Activated naive CD8-positive, alpha-beta T cell treated with anti-CD3 and anti-CD28 coated beads, Interleukin-2, amount 10 ng/mL, durations not matched to agents 7 days and 5 days (primary cell): ENCODE measurements at regions of chr1 and their contacts with region 1.

Region 1: GRCh38 chr1:200669314-200670241 is at the start of gene DDX59:
- DNase-seq: peak; percentile 94
- ATAC-seq: peak; percentile 84
- H3K4me3 Mint-ChIP-seq: peak within 1 kb of the TSS; percentile 99
- H3K27ac Mint-ChIP-seq: peak within 1 kb of the TSS; percentile 93
- H3K4me1 Mint-ChIP-seq: peaks cover 25% of the 10 kb centered on the region
- H3K27me3 Mint-ChIP-seq: no peaks in the 10 kb centered on the region
- total RNA-seq, gene DDX59: 28.1 to 33.9 TPM

Region 2: GRCh38 chr1:200602632-200603031 is 66.9 kb before region 1 on chr1:
- POLR2A ChIA-PET with region 1: no interaction called
- DNase-seq: no peak
- ATAC-seq: no peak
- H3K4me3 Mint-ChIP-seq: no peak overlapping the region
- H3K27ac Mint-ChIP-seq: no peak overlapping the region
- H3K4me1 Mint-ChIP-seq: peaks cover 2% of the 10 kb centered on the region
- H3K27me3 Mint-ChIP-seq: no peaks in the 10 kb centered on the region

Region 3: DNA sequence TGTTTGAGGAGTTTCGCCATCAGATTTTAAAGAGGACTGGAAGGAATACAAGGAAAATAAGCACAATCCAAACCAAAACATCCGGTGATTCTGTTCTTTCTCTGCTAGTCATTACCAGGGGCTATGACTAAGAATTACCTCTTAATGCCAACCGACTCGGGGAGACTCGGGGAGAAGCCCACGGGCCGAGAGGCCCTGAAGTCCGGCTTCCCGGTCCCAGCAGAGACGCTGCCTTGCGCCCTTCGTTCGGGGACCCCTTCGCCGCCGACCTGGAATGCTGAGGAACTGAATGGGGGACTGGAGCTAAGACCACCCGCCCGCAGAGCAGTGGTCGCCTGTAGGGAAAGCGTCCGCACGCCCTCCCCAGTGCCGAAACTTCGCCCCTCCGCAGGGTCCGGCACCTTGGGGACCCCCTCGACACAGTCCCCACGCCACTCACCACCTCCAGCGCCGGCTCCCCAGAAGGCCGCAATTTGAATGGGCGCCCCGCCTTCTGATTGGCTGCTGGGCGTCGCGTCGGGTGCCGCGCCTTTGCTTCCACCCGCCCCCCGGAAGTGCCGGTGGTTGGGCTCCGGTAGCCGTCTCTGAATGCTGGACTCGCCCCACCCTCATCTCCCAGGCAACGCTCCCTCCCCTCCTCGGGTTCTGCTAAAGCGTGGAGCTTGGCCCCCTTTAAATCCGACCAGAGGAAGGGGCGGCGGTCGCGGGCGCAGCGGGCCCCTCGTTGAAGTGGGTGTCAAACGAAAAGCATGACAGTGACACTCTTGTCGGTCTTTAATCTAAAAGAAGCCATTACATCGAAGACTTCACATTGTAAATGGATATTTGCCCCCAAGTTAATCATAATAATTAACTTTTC is 49.1 kb before region 1 on chr1 and contains the start of gene KIF14:
- POLR2A ChIA-PET with region 1: interaction called, 30 read pairs
- DNase-seq: peak; percentile 95
- ATAC-seq: peak; percentile 97
- H3K4me3 Mint-ChIP-seq: peak within 1 kb of the TSS; percentile 92
- H3K27ac Mint-ChIP-seq: peak within 1 kb of the TSS; percentile 90
- H3K4me1 Mint-ChIP-seq: peaks cover 47% of the 10 kb centered on the region
- H3K27me3 Mint-ChIP-seq: no peaks in the 10 kb centered on the region
- total RNA-seq, gene KIF14: 20.1 to 20.3 TPM

Region 4: GRCh38 chr1:200628223-200628881 is 41.2 kb before region 1 on chr1:
- POLR2A ChIA-PET with region 1: interaction called, 14 read pairs
- DNase-seq: no peak
- ATAC-seq: peak; percentile 59
- H3K4me3 Mint-ChIP-seq: peak overlapping the region; percentile 56
- H3K27ac Mint-ChIP-seq: peak overlapping the region; percentile 64
- H3K4me1 Mint-ChIP-seq: peaks cover 31% of the 10 kb centered on the region
- H3K27me3 Mint-ChIP-seq: no peaks in the 10 kb centered on the region

Region 5: DNA sequence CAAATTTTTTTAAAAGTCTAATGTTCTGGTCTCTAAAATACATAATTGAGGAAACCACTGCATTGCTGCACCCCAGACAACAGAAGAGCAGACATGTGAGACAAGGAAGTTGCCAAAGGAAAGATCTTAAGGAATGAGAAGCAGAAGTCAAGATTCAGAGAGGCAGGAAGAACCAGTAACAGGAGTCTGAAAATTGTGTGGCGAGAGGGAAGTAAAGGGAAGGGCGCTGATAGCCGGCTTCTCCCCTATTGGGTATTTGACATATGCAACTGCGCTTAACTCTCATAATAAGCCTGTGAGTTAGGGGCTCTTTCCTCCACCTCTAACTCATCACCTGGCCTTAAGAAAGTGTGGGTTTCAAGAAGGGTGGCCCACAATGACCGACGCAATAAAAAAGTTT is 27.1 kb before region 1 on chr1:
- POLR2A ChIA-PET with region 1: no interaction called
- DNase-seq: no peak
- ATAC-seq: no peak
- H3K4me3 Mint-ChIP-seq: no peak overlapping the region
- H3K27ac Mint-ChIP-seq: no peak overlapping the region
- H3K4me1 Mint-ChIP-seq: peaks cover 7% of the 10 kb centered on the region
- H3K27me3 Mint-ChIP-seq: no peaks in the 10 kb centered on the region

Region 6: DNA sequence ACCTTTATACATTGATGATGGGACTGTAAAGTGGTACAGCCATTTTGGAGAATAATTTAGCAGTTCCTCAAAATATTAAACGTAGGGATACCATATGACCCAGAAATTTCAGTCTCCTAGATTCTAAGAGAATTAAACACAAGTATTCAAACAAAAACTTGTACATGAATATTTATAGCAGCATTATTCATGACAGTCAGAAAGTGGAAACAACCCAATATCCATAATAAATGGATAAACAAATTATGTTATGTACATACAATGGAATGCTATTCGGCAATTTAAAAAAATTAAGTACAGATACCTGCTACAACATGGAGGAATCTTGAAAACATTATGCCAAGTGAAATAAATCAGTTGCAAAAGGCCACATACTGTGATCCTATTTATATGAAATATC is 17.0 kb after region 1 on chr1:
- POLR2A ChIA-PET with region 1: no interaction called
- DNase-seq: no peak
- ATAC-seq: no peak
- H3K4me3 Mint-ChIP-seq: no peak overlapping the region
- H3K27ac Mint-ChIP-seq: no peak overlapping the region
- H3K4me1 Mint-ChIP-seq: no peaks in the 10 kb centered on the region
- H3K27me3 Mint-ChIP-seq: peaks cover 10% of the 10 kb centered on the region

Region 7: GRCh38 chr1:200780545-200781369 is 111.2 kb after region 1 on chr1:
- POLR2A ChIA-PET with region 1: no interaction called
- DNase-seq: no peak
- ATAC-seq: no peak
- H3K4me3 Mint-ChIP-seq: peak overlapping the region; percentile 2
- H3K27ac Mint-ChIP-seq: no peak overlapping the region
- H3K4me1 Mint-ChIP-seq: peaks cover 1% of the 10 kb centered on the region
- H3K27me3 Mint-ChIP-seq: no peaks in the 10 kb centered on the region